Ovary (tissue), 10 donors: ENCODE measurements at regions of chr11 and their contacts with region 1.

Region 1: GRCh38 chr11:34266090-34266912 is 91.5 kb downstream of the ABTB2 start:
- DNase-seq: peak; percentile 58 to 80 (median 67)
- H3K4me3 ChIP-seq: no peak overlapping the region
- H3K27ac ChIP-seq: peak overlapping the region in 1 of 2 donors; percentile 60
- H3K4me1 ChIP-seq: peaks cover 6% of the 10 kb centered on the region
- H3K27me3 ChIP-seq: no peaks in the 10 kb centered on the region
- CTCF ChIP-seq: no peak
- EP300 ChIP-seq: no peak
- POLR2A ChIP-seq: no peak

Region 2: GRCh38 chr11:34214961-34215805 is 51.1 kb before region 1 on chr11:
- intact Hi-C with region 1: loop called in 1 of 4 experiments (anchors 10 kb)
- DNase-seq: no peak
- H3K4me3 ChIP-seq: no peak overlapping the region
- H3K27ac ChIP-seq: no peak overlapping the region
- H3K4me1 ChIP-seq: no peaks in the 10 kb centered on the region
- H3K27me3 ChIP-seq: no peaks in the 10 kb centered on the region
- CTCF ChIP-seq: no peak
- EP300 ChIP-seq: no peak
- POLR2A ChIP-seq: no peak

Region 3: DNA sequence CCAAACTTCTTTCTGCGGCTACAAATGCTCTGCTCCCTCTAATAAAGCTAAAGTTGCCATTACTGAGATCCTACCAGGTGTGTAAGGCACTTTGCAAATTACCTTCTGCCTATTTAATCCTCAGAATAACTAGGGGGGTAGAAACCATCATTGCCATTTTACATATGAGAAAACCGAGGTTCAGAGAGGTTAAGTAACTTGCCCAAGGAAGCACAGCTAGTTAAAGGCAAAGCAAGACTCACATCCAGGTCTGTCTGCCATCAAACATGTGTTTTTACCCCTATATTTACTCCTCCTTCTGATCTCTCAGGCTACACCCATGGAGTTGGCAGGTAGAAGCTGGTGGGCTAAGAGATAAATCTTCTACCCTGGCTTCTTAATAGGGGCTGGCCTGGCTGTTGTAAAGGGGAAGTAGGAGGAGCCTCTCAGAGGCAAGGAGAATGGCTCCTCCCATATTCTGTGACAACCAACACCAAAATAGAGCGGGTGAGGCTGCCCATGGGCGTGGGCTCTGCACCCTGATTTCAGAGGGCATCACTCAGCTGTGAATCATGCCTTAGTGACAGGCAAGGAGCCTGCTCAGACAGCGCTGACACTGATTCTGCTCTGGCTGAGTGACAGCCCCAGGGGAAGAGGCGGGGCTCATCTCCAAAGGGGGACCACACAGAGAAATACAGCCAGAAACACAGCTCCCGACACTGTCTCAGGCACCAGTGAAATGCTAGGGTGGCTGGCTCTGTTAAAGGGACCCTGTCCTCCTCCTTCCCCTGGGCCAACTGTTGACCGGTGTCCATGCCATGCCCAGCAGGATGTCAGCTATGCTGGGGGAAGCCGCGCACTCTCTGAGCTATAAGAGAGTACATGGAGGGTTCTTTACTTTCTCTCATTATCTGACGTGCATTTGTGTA is 15.3 kb before region 1 on chr11:
- intact Hi-C with region 1: loop called in 1 of 4 experiments (anchors 2 kb)
- DNase-seq: no peak
- H3K4me3 ChIP-seq: no peak overlapping the region
- H3K27ac ChIP-seq: no peak overlapping the region
- H3K4me1 ChIP-seq: no peaks in the 10 kb centered on the region
- H3K27me3 ChIP-seq: no peaks in the 10 kb centered on the region
- CTCF ChIP-seq: no peak
- EP300 ChIP-seq: no peak
- POLR2A ChIP-seq: no peak

Region 4: GRCh38 chr11:34552270-34552669 is 286.0 kb after region 1 on chr11:
- intact Hi-C with region 1: no loop called
- DNase-seq: no peak
- H3K4me3 ChIP-seq: no peak overlapping the region
- H3K27ac ChIP-seq: no peak overlapping the region
- H3K4me1 ChIP-seq: no peaks in the 10 kb centered on the region
- H3K27me3 ChIP-seq: no peaks in the 10 kb centered on the region
- CTCF ChIP-seq: no peak
- EP300 ChIP-seq: no peak
- POLR2A ChIP-seq: no peak

Region 5: GRCh38 chr11:34745195-34745594 is 478.9 kb after region 1 on chr11:
- intact Hi-C with region 1: no loop called
- DNase-seq: no peak
- H3K4me3 ChIP-seq: no peak overlapping the region
- H3K27ac ChIP-seq: no peak overlapping the region
- H3K4me1 ChIP-seq: no peaks in the 10 kb centered on the region
- H3K27me3 ChIP-seq: no peaks in the 10 kb centered on the region
- CTCF ChIP-seq: no peak
- EP300 ChIP-seq: no peak
- POLR2A ChIP-seq: no peak